ENCODE measurements at regions of chr2 and their contacts with region 1.

Region 1: DNA sequence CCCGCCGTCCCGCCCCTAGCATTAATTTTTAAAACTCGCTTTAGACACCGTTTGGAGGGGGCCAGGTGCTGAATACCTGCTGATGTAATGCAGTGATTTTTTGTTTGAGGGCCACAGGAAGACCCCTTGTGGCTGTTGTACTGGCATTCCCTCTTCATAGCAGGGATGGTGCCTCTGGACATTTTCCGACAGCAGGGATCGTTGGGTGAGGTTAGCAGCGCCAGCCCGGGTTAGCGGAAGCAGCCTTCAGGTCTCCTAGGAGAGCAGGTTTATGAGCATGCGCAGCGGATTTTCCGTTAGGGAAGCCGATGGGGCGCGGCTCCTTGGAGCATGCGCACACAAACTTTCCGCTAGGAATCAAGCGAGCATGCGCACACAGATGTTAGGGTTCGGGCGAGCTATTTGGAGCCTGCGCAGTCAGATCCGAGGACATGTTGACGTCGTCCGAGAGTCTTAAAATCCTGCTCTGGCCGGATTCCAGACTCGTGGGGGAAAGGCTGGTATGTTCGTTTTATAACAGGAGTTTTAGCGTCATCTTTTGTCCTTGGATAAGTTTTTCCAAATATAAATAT is 17.2 kb upstream of the C2orf74 start:
- DNase-seq: peak; percentile 94 to 98
- H3K4me3 ChIP-seq: peak overlapping the region; percentile 75
- H3K27ac ChIP-seq: no peak overlapping the region
- H3K4me1 ChIP-seq: peaks cover 5% of the 10 kb centered on the region
- H3K27me3 ChIP-seq: no peaks in the 10 kb centered on the region
- CTCF ChIP-seq: no peak

Region 2: DNA sequence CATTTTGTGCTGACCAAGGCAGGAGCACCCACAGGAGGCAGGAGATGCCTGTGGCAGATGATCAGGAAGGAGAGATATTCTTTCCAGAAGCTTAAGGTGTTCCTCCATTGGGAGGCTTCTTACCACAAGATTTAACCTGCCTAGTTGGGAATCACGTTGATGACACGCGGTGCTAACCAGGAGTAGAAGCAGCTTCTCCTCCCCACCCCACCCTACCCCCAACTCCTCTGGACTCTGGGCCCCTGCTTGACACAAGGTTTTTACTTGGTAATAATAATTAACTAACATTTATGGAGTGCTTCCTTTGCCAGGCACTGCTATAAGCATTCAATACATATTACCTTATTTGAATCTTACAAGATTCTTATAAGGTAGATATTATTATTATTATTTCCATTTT is 451.2 kb before region 1 on chr2:
- CTCF ChIA-PET with region 1: no interaction called
- POLR2A ChIA-PET with region 1: no interaction called
- intact Hi-C with region 1: no loop called
- DNase-seq: no peak
- H3K4me3 ChIP-seq: no peak overlapping the region
- H3K27ac ChIP-seq: no peak overlapping the region
- H3K4me1 ChIP-seq: no peaks in the 10 kb centered on the region
- H3K27me3 ChIP-seq: peaks cover 42% of the 10 kb centered on the region
- CTCF ChIP-seq: no peak

Region 3: DNA sequence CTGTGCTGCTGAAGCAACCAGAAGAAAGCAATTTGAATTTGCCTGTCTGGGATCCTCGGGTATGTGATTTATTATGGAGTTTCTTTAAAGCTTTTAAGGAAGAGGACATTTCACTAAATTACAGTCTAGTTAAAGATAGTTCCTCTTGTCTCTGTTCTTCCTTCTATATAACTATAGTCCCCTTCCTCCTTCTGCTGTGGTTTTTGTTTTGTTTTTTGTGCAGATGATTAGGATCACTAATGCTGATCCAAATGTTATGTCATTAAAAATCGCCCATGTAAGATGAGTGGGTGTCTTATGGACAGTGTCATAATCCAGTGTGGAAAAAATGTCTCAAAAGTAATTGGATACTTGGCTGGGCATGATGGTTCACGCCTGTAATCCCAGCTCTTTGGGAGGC is 364.1 kb before region 1 on chr2:
- CTCF ChIA-PET with region 1: no interaction called
- POLR2A ChIA-PET with region 1: interaction called, 18 read pairs
- intact Hi-C with region 1: no loop called
- DNase-seq: no peak
- H3K4me3 ChIP-seq: no peak overlapping the region
- H3K27ac ChIP-seq: no peak overlapping the region
- H3K4me1 ChIP-seq: no peaks in the 10 kb centered on the region
- H3K27me3 ChIP-seq: no peaks in the 10 kb centered on the region
- CTCF ChIP-seq: no peak

Region 4: DNA sequence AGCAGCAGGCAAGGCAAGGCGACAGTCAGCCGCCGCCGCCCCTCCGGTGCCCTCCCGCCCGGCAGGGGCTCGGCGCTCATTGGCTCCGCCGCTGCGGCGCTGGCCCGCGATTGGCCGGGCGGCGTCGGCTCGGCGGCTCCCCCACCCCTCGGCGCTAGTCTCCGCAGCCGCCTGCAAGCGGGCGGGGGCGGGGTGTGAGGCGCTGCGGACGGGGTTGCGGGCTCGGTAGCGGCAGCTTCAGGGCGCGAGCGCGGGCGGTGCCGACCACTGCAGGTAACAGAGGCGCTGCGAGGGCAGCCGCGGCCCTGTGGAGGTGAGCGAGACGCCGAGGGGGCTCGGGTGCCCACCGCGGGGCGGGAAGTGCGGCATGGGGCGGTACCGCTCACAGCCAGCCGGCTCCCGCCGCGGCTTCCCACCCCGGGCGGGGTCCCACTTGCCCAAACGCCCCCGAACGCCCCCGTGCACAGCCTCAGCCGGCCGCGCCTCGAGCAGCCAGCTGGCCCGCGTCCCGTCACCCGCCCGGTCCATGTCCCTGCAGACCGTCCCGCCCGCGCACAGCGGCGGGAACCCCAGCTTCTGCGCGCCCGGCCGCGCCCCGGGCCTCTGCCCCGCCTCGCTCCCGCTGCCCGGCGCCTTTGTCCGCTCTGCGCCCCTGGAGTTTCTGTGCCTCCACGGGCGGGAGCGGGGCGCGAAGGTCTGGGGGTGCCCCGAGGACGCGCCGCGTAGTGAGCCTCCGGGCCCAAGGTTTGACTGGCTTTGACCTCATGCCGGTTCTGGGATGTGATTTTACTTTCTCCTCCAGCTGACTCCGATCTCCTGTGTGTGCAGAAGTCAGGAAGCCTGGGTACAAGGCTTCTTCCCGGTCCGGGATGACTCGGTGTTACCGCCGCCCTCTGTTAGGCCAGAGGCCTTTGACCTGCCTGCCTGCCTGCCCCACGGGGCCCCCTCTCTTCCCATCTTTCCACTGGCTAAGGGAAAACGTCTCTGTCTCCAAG is 78.8 kb before region 1 on chr2 and contains the start of gene SANBR:
- CTCF ChIA-PET with region 1: no interaction called
- POLR2A ChIA-PET with region 1: no interaction called
- intact Hi-C with region 1: loop called (anchors 1 kb)
- DNase-seq: peak in 1 of 2 experiments; percentile 95
- H3K4me3 ChIP-seq: peak within 1 kb of the TSS; percentile 84
- H3K27ac ChIP-seq: no peak within 1 kb of the TSS
- H3K4me1 ChIP-seq: peaks cover 8% of the 10 kb centered on the region
- H3K27me3 ChIP-seq: no peaks in the 10 kb centered on the region
- CTCF ChIP-seq: no peak
- total RNA-seq, gene SANBR: 12.6 and 13.8 TPM in 2 replicates

Region 5: DNA sequence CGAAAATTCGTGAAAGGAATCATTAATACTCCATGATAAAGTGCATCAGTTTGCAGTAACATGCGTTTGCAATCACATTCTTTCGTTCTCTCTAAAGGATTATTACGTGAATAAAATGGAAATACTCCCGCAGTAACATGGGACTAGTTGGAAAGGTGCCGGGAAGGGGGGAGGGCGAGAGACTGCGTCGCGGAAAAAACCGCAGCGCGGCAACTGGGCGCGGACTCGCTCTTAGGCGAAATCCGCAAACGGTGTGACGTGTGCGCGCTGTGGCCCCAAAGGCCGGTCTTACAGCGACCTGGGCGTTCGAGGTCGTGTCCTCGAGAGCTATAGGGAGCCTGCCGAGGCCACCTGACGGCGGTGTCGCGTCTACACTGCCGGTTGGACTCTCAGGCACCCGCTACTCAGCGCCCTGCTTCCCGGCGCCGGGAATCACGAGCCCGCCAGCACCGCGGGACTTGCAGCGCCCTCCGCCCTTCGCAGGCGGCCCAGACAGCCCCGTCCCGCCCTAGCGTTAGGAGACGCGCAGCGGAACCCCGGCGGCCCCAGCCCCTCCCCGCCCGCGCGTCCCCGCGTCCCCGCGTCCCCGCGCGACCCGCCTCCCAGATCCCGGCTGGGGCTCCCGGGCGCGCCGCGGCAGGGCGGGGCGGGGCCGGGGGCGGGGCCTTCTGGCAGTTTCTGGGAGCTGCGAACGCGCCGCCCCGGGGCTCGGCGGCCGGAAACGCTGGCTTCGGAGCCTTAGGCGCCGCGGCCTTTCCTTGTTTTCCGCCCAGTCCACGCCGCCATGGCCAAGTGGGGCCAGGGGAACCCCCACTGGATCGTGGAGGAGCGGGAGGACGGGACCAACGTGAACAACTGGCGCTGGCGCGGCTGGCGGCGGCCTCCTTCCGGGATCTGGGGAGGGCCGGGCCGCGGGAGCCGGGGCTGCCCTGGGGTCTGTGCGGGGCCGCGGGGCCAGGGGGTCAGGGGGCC is 32.3 kb after region 1 on chr2:
- CTCF ChIA-PET with region 1: no interaction called
- POLR2A ChIA-PET with region 1: interaction called, 5 read pairs
- intact Hi-C with region 1: loop called (anchors 2 kb)
- DNase-seq: peak; percentile 81 to 99
- H3K4me3 ChIP-seq: peak overlapping the region; percentile 62
- H3K27ac ChIP-seq: peak overlapping the region; percentile 89
- H3K4me1 ChIP-seq: peaks cover 29% of the 10 kb centered on the region
- H3K27me3 ChIP-seq: no peaks in the 10 kb centered on the region
- CTCF ChIP-seq: no peak; the same call in 1 of the 2 replicates

Region 6: DNA sequence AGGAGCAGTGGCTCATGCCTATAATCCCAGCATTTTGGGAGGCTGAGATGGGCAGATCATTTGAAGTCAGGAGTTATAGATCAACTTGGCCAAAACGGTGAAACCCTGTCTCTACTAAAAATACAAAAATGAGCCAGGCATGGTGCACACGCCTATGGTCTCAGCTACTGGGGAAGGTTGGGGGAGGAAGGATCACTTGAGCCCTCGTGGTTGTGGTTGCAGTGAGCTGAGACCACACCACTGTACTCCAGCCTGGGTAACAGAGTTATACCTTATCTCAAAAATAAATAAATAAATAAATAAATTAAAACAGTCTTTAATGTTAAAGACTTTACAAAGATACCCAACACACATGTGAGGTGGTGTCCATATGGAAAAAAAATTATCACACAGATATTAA is 151.2 kb after region 1 on chr2:
- CTCF ChIA-PET with region 1: no interaction called
- POLR2A ChIA-PET with region 1: interaction called, 11 read pairs
- intact Hi-C with region 1: no loop called
- DNase-seq: no peak
- H3K4me3 ChIP-seq: no peak overlapping the region
- H3K27ac ChIP-seq: no peak overlapping the region
- H3K4me1 ChIP-seq: no peaks in the 10 kb centered on the region
- H3K27me3 ChIP-seq: no peaks in the 10 kb centered on the region
- CTCF ChIP-seq: no peak